Activated CD8-positive, alpha-beta T cell treated with anti-CD3 and anti-CD28 coated beads, Interleukin-2, amount 10 ng/mL, durations not matched to agents 7 days and 5 days (primary cell): ENCODE measurements at regions of chr1 and their contacts with region 1.

Region 1: DNA sequence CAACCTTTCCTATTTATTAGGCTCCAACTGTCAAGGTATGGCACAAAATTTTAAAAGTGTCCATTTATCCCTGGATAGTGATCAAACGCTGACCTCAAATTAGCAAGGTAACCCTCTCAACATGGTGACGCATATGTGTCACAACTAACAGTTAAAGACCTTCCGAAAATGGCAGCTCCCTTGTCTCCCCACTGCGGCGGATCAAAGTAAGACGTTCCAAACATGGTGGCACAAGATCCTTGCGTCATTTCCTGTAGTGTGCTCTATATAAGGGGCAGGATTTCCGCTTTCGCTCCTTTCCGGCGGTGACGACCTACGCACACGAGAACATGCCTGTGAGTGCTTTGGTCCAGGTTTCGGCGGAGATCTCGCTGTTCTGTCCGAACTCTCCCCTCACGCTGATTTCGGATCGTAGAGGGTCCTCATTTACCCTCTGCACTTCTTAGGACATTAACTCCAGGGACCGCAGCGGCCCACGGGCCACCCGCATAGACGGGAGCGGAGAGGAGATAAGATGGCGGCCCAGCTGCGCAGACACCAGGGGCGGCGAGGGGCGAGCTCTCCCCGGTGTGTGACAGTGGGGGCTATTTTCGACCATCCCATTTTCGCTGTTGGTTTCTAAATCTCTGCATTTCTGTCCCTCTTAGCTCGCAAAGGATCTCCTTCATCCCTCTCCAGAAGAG is at the start of gene RPS27:
- DNase-seq: peak; percentile 94
- ATAC-seq: peak; percentile 79
- H3K4me3 Mint-ChIP-seq: peak within 1 kb of the TSS; percentile 93
- H3K27ac Mint-ChIP-seq: peak within 1 kb of the TSS; percentile 98
- H3K4me1 Mint-ChIP-seq: peaks cover 47% of the 10 kb centered on the region
- H3K27me3 Mint-ChIP-seq: no peaks in the 10 kb centered on the region
- total RNA-seq, gene RPS27: 1,866 to 2,104 TPM

Region 2: DNA sequence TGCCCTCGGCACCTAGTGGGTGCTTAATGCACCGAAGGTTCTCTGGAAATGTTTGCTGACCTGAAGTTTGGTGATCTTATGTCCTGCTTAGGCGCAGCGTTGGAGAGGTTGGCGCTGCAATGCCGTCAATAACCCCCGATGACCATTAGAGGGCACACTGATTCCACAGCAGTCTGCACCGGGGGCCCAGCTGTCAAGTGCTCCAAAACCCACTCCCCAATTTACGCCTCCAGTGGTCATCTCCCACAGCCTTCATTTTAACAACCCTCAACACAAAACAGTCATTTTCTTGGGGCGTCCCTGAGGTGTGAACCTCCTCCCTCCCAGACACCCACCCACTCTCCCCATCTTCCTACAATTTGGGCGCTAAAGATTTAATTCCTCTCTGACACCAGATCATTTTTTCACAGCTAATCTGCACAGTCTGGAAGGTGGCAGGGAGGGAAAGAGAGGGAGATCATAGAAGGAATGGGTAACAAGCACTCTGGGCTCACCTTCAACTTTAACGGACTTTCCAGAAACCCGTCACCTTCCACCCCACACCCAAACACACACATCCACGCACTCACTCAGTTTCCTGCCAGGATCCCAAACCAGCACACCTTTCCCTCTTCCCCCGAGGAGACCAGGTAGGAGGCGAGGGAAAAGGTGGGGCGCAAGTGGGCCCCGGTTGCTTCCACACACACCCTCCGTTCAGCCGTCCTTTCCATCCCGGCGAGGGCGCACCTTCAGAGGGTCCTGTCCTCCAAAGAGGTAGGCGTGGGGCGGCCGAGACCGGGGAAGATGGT is 312.7 kb before region 1 on chr1:
- CTCF ChIA-PET with region 1: interaction called, 17 read pairs
- POLR2A ChIA-PET with region 1: no interaction called
- DNase-seq: peak; percentile 66
- ATAC-seq: peak; percentile 43
- H3K4me3 Mint-ChIP-seq: peak overlapping the region; percentile 73
- H3K27ac Mint-ChIP-seq: no peak overlapping the region
- H3K4me1 Mint-ChIP-seq: peaks cover 21% of the 10 kb centered on the region
- H3K27me3 Mint-ChIP-seq: peaks cover 46% of the 10 kb centered on the region

Region 3: DNA sequence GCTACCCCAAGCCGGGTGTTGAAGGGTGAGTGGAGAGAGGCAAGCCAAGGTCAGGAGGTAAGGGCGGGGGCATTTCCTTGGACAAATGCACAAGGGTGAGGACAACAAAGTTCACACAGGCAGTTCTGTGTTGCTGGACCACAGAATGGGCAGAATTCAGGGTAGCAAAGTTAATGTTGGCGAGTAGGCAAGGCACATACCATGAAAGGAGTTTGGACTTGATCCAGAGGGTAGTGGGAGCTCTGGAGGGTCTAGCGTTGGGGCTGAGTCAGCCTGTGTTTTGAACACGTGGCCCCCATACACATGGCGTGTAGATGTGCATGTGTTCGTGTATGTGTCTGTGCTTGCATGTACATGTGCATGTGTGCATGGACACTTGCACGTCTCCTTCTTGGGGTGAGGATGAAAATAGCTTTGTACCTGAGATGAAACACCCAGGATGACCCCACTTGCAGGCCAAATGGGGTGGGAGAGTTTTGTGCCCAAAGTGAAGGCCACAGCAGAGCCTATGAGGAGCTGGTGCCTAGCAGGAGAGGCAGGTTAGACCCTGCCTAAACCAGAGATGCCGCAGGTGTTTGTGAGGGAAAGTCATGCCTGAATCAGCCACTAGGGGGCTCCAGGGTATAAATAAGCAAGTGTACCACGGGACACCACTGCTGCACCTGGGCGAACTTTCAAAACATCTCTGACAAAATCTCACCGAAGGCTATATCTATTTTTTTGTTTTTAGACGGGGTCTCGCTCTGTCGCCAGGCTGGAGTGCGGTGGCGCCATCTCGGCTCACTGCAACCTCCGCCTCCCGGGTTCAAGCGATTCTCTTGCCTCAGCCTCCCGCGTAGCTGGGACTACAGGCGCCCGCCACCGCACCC is 193.6 kb before region 1 on chr1:
- CTCF ChIA-PET with region 1: interaction called, 50 read pairs
- POLR2A ChIA-PET with region 1: interaction called, 5 read pairs
- DNase-seq: peak; percentile 93
- ATAC-seq: peak; percentile 83
- H3K4me3 Mint-ChIP-seq: no peak overlapping the region
- H3K27ac Mint-ChIP-seq: peak overlapping the region; percentile 79
- H3K4me1 Mint-ChIP-seq: peaks cover 58% of the 10 kb centered on the region
- H3K27me3 Mint-ChIP-seq: no peaks in the 10 kb centered on the region

Region 4: GRCh38 chr1:153827168-153827964 is 163.2 kb before region 1 on chr1:
- CTCF ChIA-PET with region 1: interaction called, 32 read pairs
- POLR2A ChIA-PET with region 1: no interaction called
- DNase-seq: no peak
- ATAC-seq: no peak
- H3K4me3 Mint-ChIP-seq: no peak overlapping the region
- H3K27ac Mint-ChIP-seq: no peak overlapping the region
- H3K4me1 Mint-ChIP-seq: no peaks in the 10 kb centered on the region
- H3K27me3 Mint-ChIP-seq: no peaks in the 10 kb centered on the region

Region 5: GRCh38 chr1:153958111-153958960 is 32.3 kb before region 1 on chr1 and contains the start of gene CRTC2:
- CTCF ChIA-PET with region 1: interaction called, 109 read pairs
- POLR2A ChIA-PET with region 1: interaction called, 11 read pairs
- DNase-seq: peak; percentile 99
- ATAC-seq: peak; percentile 87
- H3K4me3 Mint-ChIP-seq: peak within 1 kb of the TSS; percentile 95
- H3K27ac Mint-ChIP-seq: peak within 1 kb of the TSS; percentile 94
- H3K4me1 Mint-ChIP-seq: peaks cover 70% of the 10 kb centered on the region
- H3K27me3 Mint-ChIP-seq: no peaks in the 10 kb centered on the region
- total RNA-seq, gene CRTC2: 85.1 to 104 TPM

Region 6: GRCh38 chr1:154157520-154158306 is 167.1 kb after region 1 on chr1:
- CTCF ChIA-PET with region 1: interaction called, 14 read pairs
- POLR2A ChIA-PET with region 1: interaction called, 31 read pairs
- DNase-seq: peak; percentile 89
- ATAC-seq: peak; percentile 98
- H3K4me3 Mint-ChIP-seq: peak overlapping the region; percentile 66
- H3K27ac Mint-ChIP-seq: peak overlapping the region; percentile 94
- H3K4me1 Mint-ChIP-seq: peaks cover 73% of the 10 kb centered on the region
- H3K27me3 Mint-ChIP-seq: no peaks in the 10 kb centered on the region

Region 7: GRCh38 chr1:154352581-154353459 is 362.2 kb after region 1 on chr1:
- CTCF ChIA-PET with region 1: no interaction called
- POLR2A ChIA-PET with region 1: no interaction called
- DNase-seq: peak; percentile 49
- ATAC-seq: peak; percentile 73
- H3K4me3 Mint-ChIP-seq: peak overlapping the region; percentile 66
- H3K27ac Mint-ChIP-seq: peak overlapping the region; percentile 45
- H3K4me1 Mint-ChIP-seq: peaks cover 22% of the 10 kb centered on the region
- H3K27me3 Mint-ChIP-seq: peaks cover 23% of the 10 kb centered on the region